ENCODE measurements at regions of chr16 and their contacts with region 1.

Region 1: GRCh38 chr16:74633686-74634085 is 26.8 kb upstream of the GLG1 start:
- DNase-seq: no peak
- ATAC-seq: no peak
- H3K4me3 Mint-ChIP-seq: no peak overlapping the region
- H3K27ac Mint-ChIP-seq: no peak overlapping the region
- H3K4me1 Mint-ChIP-seq: no peaks in the 10 kb centered on the region
- H3K27me3 Mint-ChIP-seq: no peaks in the 10 kb centered on the region
- CTCF ChIP-seq: no peak

Region 2: GRCh38 chr16:74617206-74617788 is 16.4 kb before region 1 on chr16:
- CTCF ChIA-PET with region 1: no interaction called
- POLR2A ChIA-PET with region 1: no interaction called
- DNase-seq: no peak
- ATAC-seq: no peak
- H3K4me3 Mint-ChIP-seq: no peak overlapping the region
- H3K27ac Mint-ChIP-seq: no peak overlapping the region
- H3K4me1 Mint-ChIP-seq: peaks cover 8% of the 10 kb centered on the region
- H3K27me3 Mint-ChIP-seq: no peaks in the 10 kb centered on the region
- CTCF ChIP-seq: no peak

Region 3: DNA sequence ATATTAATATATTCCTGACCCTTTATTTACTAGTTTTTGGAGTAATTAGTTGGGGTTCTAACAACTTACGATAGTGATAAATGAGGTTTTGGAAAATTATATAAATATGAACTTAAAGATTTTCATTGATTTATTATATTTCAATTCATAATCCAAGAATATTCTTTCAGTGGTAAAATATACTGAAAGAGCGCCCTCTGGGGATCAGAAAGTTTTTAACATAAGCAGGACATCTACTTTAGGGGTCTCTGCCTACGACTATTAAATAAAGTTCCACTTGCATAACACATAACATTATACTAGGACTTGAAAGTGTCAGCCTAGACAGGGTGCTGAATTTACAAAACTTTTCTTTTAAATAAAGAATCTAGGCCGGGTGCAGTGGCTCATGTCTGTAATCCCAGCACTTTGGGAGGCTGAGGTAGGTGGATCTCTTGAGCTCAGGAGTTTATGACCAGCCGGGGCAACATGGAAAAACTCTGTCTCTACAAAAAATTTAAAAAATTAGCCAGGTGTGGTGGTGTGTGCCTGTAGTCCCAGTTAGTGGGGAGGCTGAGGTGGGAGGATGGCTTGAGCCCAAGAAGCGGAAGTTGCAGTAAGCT is 17.4 kb after region 1 on chr16:
- CTCF ChIA-PET with region 1: interaction called, 4 read pairs
- POLR2A ChIA-PET with region 1: interaction called, 12 read pairs
- DNase-seq: no peak
- ATAC-seq: no peak
- H3K4me3 Mint-ChIP-seq: no peak overlapping the region
- H3K27ac Mint-ChIP-seq: no peak overlapping the region
- H3K4me1 Mint-ChIP-seq: no peaks in the 10 kb centered on the region
- H3K27me3 Mint-ChIP-seq: no peaks in the 10 kb centered on the region
- CTCF ChIP-seq: peak; percentile 27; the same call in 1 of the 2 replicates

Measured in WTC11 (cell line).